BJ (cell line): ENCODE measurements at regions of chr15 and their contacts with region 1.

Region 1: GRCh38 chr15:90221246-90221900 is 12.4 kb downstream of the CIB1 start:
- DNase-seq: no peak
- H3K4me3 ChIP-seq: no peak overlapping the region
- H3K27me3 ChIP-seq: no peaks in the 10 kb centered on the region
- CTCF ChIP-seq: peak; percentile 92

Region 2: DNA sequence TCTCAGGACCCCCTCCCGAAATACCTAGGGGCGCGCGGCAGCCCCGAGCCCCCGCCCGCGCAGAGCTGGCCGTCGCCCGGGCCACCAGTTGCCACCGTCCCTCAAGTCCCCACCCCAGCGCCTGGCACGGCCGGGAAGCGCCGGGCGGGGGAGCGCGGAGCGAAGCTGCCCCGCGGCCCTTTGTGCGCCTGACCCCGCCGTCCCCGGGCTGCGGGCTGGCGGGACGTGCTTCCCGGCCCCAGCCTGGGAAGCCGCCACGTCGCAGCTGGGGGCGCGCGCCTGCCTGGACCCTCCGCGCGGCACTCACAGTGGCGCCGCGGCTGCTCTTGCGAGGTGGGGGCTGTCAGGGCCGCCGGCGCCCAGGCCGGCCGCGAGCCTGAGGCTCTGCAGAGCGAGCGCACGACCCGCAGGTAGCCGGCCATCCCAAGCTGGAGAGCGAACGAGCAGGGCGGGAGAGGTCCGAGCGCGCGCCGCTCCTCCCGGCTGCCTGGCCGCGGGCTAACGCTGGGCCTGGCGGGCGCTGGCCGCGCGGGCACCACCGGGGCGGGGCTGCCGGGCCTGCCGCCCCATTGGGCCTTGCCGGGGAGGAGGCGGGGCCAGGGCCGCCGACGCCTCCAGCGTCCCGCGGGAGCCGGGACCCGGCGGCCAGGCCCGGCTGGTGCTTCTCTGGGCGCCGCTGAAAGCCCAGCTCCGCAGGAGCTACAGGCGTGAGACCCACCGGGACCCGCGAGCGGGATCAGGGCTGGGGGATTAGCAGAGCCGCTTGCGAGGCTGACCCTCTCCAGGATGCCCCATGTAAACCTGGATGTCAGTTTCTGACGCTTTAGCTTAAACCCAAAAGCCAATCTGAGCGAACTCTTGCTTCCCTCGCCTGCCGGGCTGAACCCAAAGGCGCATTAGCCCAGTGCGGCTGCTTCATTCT is 119.1 kb before region 1 on chr15 and contains the start of gene IDH2:
- CTCF ChIA-PET with region 1: interaction called, 19 read pairs
- POLR2A ChIA-PET with region 1: no interaction called
- DNase-seq: no peak
- H3K4me3 ChIP-seq: peak within 1 kb of the TSS; percentile 64
- H3K27me3 ChIP-seq: no peaks in the 10 kb centered on the region
- CTCF ChIP-seq: no peak
- polyA plus RNA-seq, gene IDH2: 98.7 and 164 TPM in 2 replicates

Region 3: DNA sequence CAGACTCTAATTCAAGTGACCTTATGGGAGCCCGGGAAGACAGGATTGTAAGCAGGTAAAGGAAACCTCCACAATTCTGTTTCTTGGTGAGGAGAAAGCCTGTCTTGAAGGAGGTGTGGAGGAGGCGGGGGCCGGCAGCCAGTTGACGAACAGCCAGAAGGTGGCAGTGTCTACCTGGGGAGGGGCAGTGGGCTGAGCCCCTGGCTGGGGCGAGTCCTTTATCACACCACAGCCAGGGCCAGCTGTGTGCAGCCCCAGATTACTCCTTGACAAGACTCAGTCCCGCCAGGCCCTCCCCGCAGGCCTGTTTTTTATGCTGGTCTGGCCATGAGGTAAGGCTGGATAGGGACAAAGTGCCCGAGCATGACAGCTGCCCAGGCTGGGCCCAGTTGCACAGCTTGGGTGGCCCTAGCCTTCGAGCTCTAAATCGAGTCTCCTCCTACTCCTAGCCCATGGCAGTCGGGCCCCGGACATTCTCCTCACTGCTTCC is 78.2 kb before region 1 on chr15:
- CTCF ChIA-PET with region 1: interaction called, 35 read pairs
- POLR2A ChIA-PET with region 1: no interaction called
- DNase-seq: no peak
- H3K4me3 ChIP-seq: no peak overlapping the region
- H3K27me3 ChIP-seq: no peaks in the 10 kb centered on the region
- CTCF ChIP-seq: peak; percentile 58

Region 4: GRCh38 chr15:90154861-90155626 is 66.3 kb before region 1 on chr15:
- CTCF ChIA-PET with region 1: interaction called, 14 read pairs
- POLR2A ChIA-PET with region 1: no interaction called
- DNase-seq: peak; percentile 79
- H3K4me3 ChIP-seq: no peak overlapping the region
- H3K27me3 ChIP-seq: no peaks in the 10 kb centered on the region
- CTCF ChIP-seq: no peak

Region 5: GRCh38 chr15:90165659-90166421 is 55.5 kb before region 1 on chr15:
- CTCF ChIA-PET with region 1: interaction called, 43 read pairs
- POLR2A ChIA-PET with region 1: no interaction called
- DNase-seq: peak; percentile 97
- H3K4me3 ChIP-seq: no peak overlapping the region
- H3K27me3 ChIP-seq: no peaks in the 10 kb centered on the region
- CTCF ChIP-seq: no peak

Region 6: GRCh38 chr15:90201130-90201949 is 20.0 kb before region 1 on chr15 and contains the start of gene SEMA4B:
- CTCF ChIA-PET with region 1: interaction called, 18 read pairs
- POLR2A ChIA-PET with region 1: no interaction called
- DNase-seq: no peak
- H3K4me3 ChIP-seq: peak within 1 kb of the TSS; percentile 78
- H3K27me3 ChIP-seq: no peaks in the 10 kb centered on the region
- CTCF ChIP-seq: no peak
- polyA plus RNA-seq, gene SEMA4B: 9.2 and 17.5 TPM in 2 replicates

Region 7: GRCh38 chr15:90233376-90234095 is 12.2 kb after region 1 on chr15 and contains the start of gene CIB1:
- CTCF ChIA-PET with region 1: interaction called, 46 read pairs
- POLR2A ChIA-PET with region 1: no interaction called
- DNase-seq: peak; percentile 76
- H3K4me3 ChIP-seq: peak within 1 kb of the TSS; percentile 92
- H3K27me3 ChIP-seq: no peaks in the 10 kb centered on the region
- CTCF ChIP-seq: no peak; the same call in 1 of the 2 replicates
- polyA plus RNA-seq, gene CIB1: 60.5 and 102 TPM in 2 replicates